MCF 10A (cell line): ENCODE measurements at regions of chr10 and their contacts with region 1.

Region 1: DNA sequence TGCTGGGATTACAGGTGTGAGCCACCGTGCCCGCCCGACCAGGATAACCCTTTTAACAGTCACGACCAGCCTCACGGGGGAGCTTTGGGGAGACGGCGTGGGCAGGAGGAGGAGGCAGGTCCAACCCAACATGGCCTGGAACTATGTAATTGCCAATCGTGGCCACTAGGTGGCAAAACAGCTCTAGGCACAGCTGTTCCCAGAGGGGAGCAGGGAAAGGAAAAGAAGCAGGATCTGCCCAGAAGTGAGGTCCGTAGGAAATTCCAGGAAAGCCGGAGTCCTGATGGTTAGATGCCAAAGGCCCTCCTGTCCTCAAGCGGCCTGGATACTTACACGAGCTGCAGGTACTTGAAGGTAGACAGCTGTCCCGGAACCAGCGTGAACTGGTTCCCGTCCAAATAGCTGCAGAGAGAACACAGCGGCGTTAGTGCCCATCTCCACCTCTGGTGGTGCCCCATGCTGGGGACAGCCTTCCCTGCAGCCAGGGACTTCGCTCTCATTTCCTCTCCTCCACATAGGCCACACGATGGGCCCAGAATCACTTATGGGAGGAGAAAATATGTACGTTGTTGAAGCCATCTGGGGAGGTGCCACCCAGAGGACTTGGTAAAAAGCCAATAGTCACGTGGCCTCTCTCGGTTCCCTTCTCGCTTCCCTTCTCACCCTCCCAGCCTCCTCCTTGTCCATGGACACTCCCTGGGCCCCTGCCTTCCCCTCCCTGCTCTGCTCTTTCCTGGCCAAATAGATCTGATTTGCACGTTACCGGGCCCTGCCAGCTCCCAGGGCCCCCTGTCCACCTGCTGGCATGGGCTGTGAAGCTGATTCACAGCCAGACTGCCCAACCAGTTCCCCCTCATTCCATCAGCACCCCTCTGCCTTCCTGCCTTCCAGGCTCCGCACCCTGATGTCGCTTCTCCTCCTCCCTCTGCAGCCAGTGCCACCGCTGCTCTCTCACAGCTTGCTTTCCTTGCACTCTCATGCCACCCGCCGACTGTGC is 148.1 kb downstream of the SLIT1 start:
- DNase-seq: peak; percentile 89
- H3K4me3 Mint-ChIP-seq: peak overlapping the region; percentile 50
- H3K27ac Mint-ChIP-seq: no peak overlapping the region
- H3K4me1 Mint-ChIP-seq: peaks cover 9% of the 10 kb centered on the region
- H3K27me3 Mint-ChIP-seq: peaks cover 20% of the 10 kb centered on the region
- CTCF ChIP-seq: peak; percentile 83

Region 2: DNA sequence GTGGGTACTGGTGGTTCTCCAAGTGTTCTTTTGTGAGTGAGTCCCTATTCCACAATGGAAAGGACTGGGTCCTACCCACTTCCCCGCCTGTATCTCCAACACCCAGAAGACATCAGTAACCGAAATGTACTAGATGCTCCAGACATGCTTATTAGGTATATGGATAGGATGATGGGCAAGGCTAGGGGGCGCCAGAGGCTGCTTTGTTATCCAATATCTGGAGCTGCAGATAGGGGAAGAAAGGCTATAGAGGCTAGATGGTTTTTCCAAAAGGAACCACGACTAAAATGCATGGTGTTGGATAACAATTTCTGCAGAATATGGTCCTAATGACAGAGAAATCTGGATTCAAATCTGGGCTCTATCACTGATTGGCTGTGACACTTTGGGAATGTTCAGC is 394.7 kb before region 1 on chr10:
- CTCF ChIA-PET with region 1: interaction called, 9 read pairs
- POLR2A ChIA-PET with region 1: no interaction called
- intact Hi-C with region 1: loop called (anchors 10 kb)
- DNase-seq: peak; percentile 59
- H3K4me3 Mint-ChIP-seq: no peak overlapping the region
- H3K27ac Mint-ChIP-seq: no peak overlapping the region
- H3K4me1 Mint-ChIP-seq: peaks cover 6% of the 10 kb centered on the region
- H3K27me3 Mint-ChIP-seq: no peaks in the 10 kb centered on the region
- CTCF ChIP-seq: no peak

Region 3: DNA sequence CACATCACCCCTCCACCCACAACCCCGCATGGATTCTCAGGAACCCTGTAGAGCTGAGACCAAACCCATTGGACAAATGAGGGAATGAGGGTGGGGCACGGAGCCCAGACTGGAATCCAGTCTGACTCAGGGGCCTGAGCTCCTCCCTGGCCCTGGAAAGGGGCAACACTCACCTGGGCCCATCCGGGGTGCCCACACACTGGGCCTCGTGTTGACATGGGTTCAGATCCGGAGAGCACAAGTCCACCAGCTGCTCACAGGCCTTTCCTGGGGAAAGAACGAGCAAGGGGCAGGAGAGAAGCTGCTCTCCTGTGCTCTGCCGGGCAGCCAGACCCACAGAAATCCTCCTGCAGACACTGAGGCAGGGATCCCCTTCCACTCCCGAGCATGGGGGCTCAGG is 24.1 kb before region 1 on chr10:
- CTCF ChIA-PET with region 1: interaction called, 10 read pairs
- POLR2A ChIA-PET with region 1: no interaction called
- intact Hi-C with region 1: no loop called
- DNase-seq: no peak
- H3K4me3 Mint-ChIP-seq: no peak overlapping the region
- H3K27ac Mint-ChIP-seq: no peak overlapping the region
- H3K4me1 Mint-ChIP-seq: no peaks in the 10 kb centered on the region
- H3K27me3 Mint-ChIP-seq: peaks cover 11% of the 10 kb centered on the region
- CTCF ChIP-seq: no peak

Region 4: GRCh38 chr10:97025613-97026242 is 11.9 kb before region 1 on chr10:
- CTCF ChIA-PET with region 1: interaction called, 41 read pairs
- POLR2A ChIA-PET with region 1: no interaction called
- intact Hi-C with region 1: no loop called
- DNase-seq: peak; percentile 76
- H3K4me3 Mint-ChIP-seq: no peak overlapping the region
- H3K27ac Mint-ChIP-seq: no peak overlapping the region
- H3K4me1 Mint-ChIP-seq: peaks cover 10% of the 10 kb centered on the region
- H3K27me3 Mint-ChIP-seq: peaks cover 15% of the 10 kb centered on the region
- CTCF ChIP-seq: peak; percentile 64

Region 5: GRCh38 chr10:97072851-97073665 is 35.4 kb after region 1 on chr10:
- CTCF ChIA-PET with region 1: interaction called, 52 read pairs
- POLR2A ChIA-PET with region 1: no interaction called
- intact Hi-C with region 1: loop called (anchors 1 kb)
- DNase-seq: peak; percentile 79
- H3K4me3 Mint-ChIP-seq: no peak overlapping the region
- H3K27ac Mint-ChIP-seq: no peak overlapping the region
- H3K4me1 Mint-ChIP-seq: peaks cover 5% of the 10 kb centered on the region
- H3K27me3 Mint-ChIP-seq: peaks cover 35% of the 10 kb centered on the region
- CTCF ChIP-seq: peak; percentile 94

Region 6: GRCh38 chr10:97196223-97197029 is 158.8 kb after region 1 on chr10:
- CTCF ChIA-PET with region 1: interaction called, 11 read pairs
- POLR2A ChIA-PET with region 1: no interaction called
- intact Hi-C with region 1: no loop called
- DNase-seq: peak; percentile 55
- H3K4me3 Mint-ChIP-seq: peak overlapping the region; percentile 50
- H3K27ac Mint-ChIP-seq: no peak overlapping the region
- H3K4me1 Mint-ChIP-seq: no peaks in the 10 kb centered on the region
- H3K27me3 Mint-ChIP-seq: peaks cover 36% of the 10 kb centered on the region
- CTCF ChIP-seq: peak; percentile 69

Region 7: GRCh38 chr10:97217299-97217698 is 179.6 kb after region 1 on chr10:
- CTCF ChIA-PET with region 1: interaction called, 111 read pairs
- POLR2A ChIA-PET with region 1: no interaction called
- intact Hi-C with region 1: no loop called
- DNase-seq: no peak
- H3K4me3 Mint-ChIP-seq: no peak overlapping the region
- H3K27ac Mint-ChIP-seq: no peak overlapping the region
- H3K4me1 Mint-ChIP-seq: no peaks in the 10 kb centered on the region
- H3K27me3 Mint-ChIP-seq: no peaks in the 10 kb centered on the region
- CTCF ChIP-seq: no peak